Activated CD4-positive, alpha-beta memory T cell treated with anti-CD3 and anti-CD28 coated beads, Interleukin-2, amount 10 ng/mL, durations not matched to agents 7 days and 5 days (primary cell): ENCODE measurements at regions of chr11 and their contacts with region 1.

Region 1: GRCh38 chr11:134207538-134208239 is 16.1 kb downstream of the NCAPD3 start:
- DNase-seq: peak; percentile 74
- H3K4me3 Mint-ChIP-seq: no peak overlapping the region
- H3K27ac Mint-ChIP-seq: no peak overlapping the region
- H3K4me1 Mint-ChIP-seq: peaks cover 6% of the 10 kb centered on the region
- H3K27me3 Mint-ChIP-seq: no peaks in the 10 kb centered on the region

Region 2: GRCh38 chr11:134008634-134009071 is 199.0 kb before region 1 on chr11:
- CTCF ChIA-PET with region 1: no interaction called
- POLR2A ChIA-PET with region 1: no interaction called
- DNase-seq: no peak
- H3K4me3 Mint-ChIP-seq: no peak overlapping the region
- H3K27ac Mint-ChIP-seq: no peak overlapping the region
- H3K4me1 Mint-ChIP-seq: no peaks in the 10 kb centered on the region
- H3K27me3 Mint-ChIP-seq: peaks cover 37% of the 10 kb centered on the region

Region 3: GRCh38 chr11:134196756-134197155 is 10.9 kb before region 1 on chr11:
- CTCF ChIA-PET with region 1: interaction called, 10 read pairs
- POLR2A ChIA-PET with region 1: interaction called, 4 read pairs
- DNase-seq: peak; percentile 46
- H3K4me3 Mint-ChIP-seq: peak overlapping the region; percentile 42
- H3K27ac Mint-ChIP-seq: peak overlapping the region; percentile 85
- H3K4me1 Mint-ChIP-seq: peaks cover 16% of the 10 kb centered on the region
- H3K27me3 Mint-ChIP-seq: no peaks in the 10 kb centered on the region

Region 4: DNA sequence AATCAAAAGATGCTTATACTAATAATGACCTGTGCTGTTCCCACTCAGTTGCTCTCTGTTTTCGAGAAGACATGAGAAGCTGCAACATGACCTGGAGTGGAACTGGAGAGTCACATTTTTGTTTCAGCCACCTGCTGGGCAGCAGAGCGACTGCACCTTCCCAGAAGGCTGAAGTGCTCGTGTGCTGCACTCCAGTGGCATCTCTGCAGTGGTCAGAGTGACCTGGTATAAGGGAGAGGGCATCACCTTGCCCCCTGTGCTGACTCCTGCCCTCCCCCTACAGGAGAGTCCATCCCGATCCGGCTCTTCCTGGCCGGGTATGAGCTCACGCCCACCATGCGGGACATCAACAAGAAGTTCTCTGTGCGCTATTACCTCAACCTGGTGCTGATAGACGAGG is 37.0 kb after region 1 on chr11:
- CTCF ChIA-PET with region 1: interaction called, 13 read pairs
- POLR2A ChIA-PET with region 1: no interaction called
- DNase-seq: no peak
- H3K4me3 Mint-ChIP-seq: no peak overlapping the region
- H3K27ac Mint-ChIP-seq: no peak overlapping the region
- H3K4me1 Mint-ChIP-seq: peaks cover 13% of the 10 kb centered on the region
- H3K27me3 Mint-ChIP-seq: no peaks in the 10 kb centered on the region